ENCODE measurements at regions of chr10 and their contacts with region 1.

Region 1: DNA sequence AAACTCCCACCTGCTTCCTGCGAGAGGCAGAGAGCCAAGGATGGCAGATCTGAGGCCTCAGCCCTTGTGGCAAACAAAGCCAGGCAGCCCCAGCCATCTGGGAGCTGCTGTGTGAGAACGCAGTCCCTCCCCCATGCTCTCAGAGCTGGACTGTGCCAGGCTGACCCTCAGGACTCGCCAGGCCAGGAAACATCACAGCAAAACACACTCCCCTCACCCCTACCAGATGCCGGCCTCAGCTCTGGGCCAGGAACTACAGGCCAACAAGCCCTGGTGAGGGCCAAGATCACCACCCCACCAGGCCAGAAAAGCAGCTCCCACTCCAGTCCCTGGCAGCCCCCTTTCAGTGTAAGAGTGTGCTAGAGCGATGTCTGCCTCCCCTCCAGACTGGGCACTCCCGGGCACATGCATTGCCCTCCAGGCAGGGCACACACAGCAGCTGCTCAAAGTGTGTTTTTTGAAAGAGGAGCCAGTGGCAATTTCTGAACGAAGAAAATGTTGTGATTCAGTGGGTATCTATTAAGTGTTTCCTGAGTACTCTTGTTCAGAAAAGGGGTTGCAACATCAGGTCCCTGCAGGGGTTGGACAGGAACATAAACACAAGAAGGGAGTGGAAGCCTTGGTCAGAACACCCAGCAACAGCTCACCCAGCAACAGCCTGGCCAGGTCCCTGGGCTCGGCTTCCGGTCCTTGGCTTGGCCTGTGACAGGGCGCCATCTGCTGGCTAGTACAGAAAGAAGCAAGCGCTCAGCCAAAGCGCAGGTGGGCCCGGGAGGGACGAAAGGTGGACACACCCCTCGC is 18.3 kb downstream of the LRRC20 start:
- DNase-seq: peak; percentile 90
- ATAC-seq: peak; percentile 99
- H3K4me3 Mint-ChIP-seq: no peak overlapping the region
- H3K27ac Mint-ChIP-seq: no peak overlapping the region
- H3K4me1 Mint-ChIP-seq: peaks cover 9% of the 10 kb centered on the region
- H3K27me3 Mint-ChIP-seq: no peaks in the 10 kb centered on the region
- CTCF ChIP-seq: peak; percentile 87

Region 2: DNA sequence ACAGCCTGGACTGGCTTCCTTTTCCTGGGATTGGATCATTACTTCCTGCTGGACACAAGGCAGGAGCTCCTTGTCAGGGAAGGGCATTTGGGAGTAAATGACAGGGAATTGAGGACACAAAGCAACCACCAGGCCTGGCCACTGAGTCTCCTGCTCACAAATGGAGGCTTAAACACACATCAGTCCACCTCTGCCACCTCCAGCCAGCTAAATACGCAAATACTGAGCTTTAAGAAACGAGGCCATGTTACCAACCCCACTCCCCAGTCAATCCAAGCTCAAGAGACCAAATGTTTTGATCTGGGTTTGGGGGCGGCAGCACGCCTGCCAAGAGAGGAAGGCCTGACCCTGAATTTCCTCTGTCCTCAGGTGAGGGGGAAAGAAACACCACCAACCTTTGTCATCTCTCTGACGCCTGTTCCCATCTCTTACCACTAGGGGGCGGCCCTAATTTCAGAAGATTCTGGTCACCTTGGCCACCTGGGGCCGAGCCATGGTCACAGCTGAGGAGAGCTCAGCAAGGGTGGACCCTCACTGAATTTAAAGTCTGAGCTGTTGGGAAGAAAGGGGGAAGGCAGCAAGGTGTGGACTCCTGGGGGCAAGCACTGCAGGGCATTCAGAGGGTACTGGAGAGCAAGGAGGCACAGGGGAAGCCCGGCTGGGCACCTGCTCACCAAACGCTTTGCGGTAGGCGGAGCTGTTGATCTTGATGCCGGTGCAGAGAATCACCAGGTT is 248.1 kb before region 1 on chr10:
- CTCF ChIA-PET with region 1: interaction called, 26 read pairs
- POLR2A ChIA-PET with region 1: no interaction called
- intact Hi-C with region 1: no loop called
- DNase-seq: peak; percentile 77
- ATAC-seq: peak; percentile 93
- H3K4me3 Mint-ChIP-seq: no peak overlapping the region
- H3K27ac Mint-ChIP-seq: no peak overlapping the region
- H3K4me1 Mint-ChIP-seq: peaks cover 11% of the 10 kb centered on the region
- H3K27me3 Mint-ChIP-seq: no peaks in the 10 kb centered on the region
- CTCF ChIP-seq: peak; percentile 90

Region 3: DNA sequence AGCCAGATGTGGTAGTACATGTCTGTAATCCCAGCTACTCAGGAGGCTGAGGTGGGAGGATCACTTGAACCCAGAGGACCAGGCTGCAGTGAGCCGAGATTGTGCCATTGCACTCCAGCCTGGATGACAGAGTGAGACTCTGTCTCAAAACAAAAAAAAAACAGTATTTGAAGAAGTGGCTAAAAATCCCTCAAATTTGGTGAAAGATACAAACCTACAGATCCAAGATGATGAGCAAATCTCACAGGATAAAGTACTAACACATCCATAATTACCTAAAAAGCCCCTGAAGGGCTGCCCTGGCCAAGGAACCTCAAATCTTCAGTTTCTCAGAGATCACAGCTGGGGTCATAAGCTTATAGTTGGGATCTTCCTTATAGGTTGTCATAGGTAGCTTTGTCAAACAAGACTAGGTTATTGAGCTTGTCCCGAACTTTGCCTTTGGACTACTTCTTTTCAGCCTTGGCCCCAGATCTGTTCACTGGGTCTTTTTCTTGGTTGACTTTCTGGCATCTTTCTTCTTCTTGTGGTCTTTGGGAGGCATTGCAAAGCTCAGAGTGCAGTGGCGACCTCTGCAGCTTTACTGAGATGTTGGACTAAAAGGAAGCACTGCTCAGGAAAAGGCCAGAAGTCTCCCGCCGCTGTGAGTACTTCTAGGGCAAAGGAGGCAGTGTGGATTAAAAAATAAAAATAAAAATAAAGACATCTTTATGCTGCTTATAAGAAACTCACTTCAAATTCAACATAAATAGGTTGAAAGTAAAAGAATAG is 165.3 kb before region 1 on chr10:
- CTCF ChIA-PET with region 1: interaction called, 18 read pairs
- POLR2A ChIA-PET with region 1: no interaction called
- intact Hi-C with region 1: no loop called
- DNase-seq: peak; percentile 16
- ATAC-seq: no peak
- H3K4me3 Mint-ChIP-seq: no peak overlapping the region
- H3K27ac Mint-ChIP-seq: peak overlapping the region; percentile 20
- H3K4me1 Mint-ChIP-seq: peaks cover 31% of the 10 kb centered on the region
- H3K27me3 Mint-ChIP-seq: no peaks in the 10 kb centered on the region
- CTCF ChIP-seq: no peak

Region 4: DNA sequence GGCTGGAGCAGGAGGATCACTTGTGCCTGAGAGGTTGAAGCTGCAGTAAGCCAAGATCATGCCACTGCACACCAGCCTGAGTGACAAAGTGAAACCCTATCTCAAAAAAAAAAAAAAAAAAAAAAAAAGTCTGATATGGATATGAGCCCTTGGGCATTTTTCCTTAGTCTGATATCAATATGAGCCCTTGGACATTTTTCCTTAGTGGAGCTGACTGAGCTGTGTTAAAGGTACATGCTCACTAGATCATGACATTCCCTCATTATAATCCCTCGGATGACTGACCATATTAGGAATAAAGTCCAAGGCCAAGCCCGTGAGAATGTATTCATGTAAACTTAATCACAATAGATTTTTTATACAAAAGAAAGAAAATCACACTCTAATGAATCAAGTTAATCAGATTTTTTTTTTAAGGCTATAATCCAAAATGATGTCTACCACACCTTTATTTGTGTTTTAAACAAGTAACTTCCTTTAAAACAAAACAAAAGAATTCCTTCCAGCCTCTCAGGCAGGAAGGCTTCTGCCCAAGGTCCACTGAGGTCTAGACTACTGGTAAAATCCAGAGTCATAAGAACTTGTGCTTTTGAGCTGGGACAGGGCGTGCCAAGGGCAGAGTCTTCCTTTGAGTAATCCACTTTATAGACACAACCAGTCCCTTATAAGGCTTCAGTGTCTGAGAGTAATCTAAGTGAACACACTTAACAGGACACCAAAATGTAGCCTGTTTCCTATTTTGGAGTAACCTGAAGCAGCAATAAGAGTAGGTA is 136.4 kb before region 1 on chr10:
- CTCF ChIA-PET with region 1: interaction called, 321 read pairs
- POLR2A ChIA-PET with region 1: interaction called, 15 read pairs
- intact Hi-C with region 1: no loop called
- DNase-seq: no peak
- ATAC-seq: no peak
- H3K4me3 Mint-ChIP-seq: no peak overlapping the region
- H3K27ac Mint-ChIP-seq: no peak overlapping the region
- H3K4me1 Mint-ChIP-seq: peaks cover 49% of the 10 kb centered on the region
- H3K27me3 Mint-ChIP-seq: no peaks in the 10 kb centered on the region
- CTCF ChIP-seq: no peak

Region 5: GRCh38 chr10:70267161-70267933 is 96.8 kb before region 1 on chr10:
- CTCF ChIA-PET with region 1: interaction called, 48 read pairs
- POLR2A ChIA-PET with region 1: no interaction called
- intact Hi-C with region 1: no loop called
- DNase-seq: peak; percentile 35
- ATAC-seq: peak; percentile 28
- H3K4me3 Mint-ChIP-seq: no peak overlapping the region
- H3K27ac Mint-ChIP-seq: peak overlapping the region; percentile 10
- H3K4me1 Mint-ChIP-seq: peaks cover 10% of the 10 kb centered on the region
- H3K27me3 Mint-ChIP-seq: peaks cover 2% of the 10 kb centered on the region
- CTCF ChIP-seq: peak; percentile 46

Region 6: GRCh38 chr10:70320751-70321150 is 43.4 kb before region 1 on chr10:
- CTCF ChIA-PET with region 1: interaction called, 12 read pairs
- POLR2A ChIA-PET with region 1: no interaction called
- intact Hi-C with region 1: no loop called
- DNase-seq: no peak
- ATAC-seq: no peak
- H3K4me3 Mint-ChIP-seq: no peak overlapping the region
- H3K27ac Mint-ChIP-seq: no peak overlapping the region
- H3K4me1 Mint-ChIP-seq: peaks cover 31% of the 10 kb centered on the region
- H3K27me3 Mint-ChIP-seq: no peaks in the 10 kb centered on the region
- CTCF ChIP-seq: no peak

Region 7: GRCh38 chr10:70381471-70382421 is 17.6 kb after region 1 on chr10:
- CTCF ChIA-PET with region 1: interaction called, 37 read pairs
- POLR2A ChIA-PET with region 1: no interaction called
- intact Hi-C with region 1: no loop called
- DNase-seq: peak; percentile 51
- ATAC-seq: peak; percentile 42
- H3K4me3 Mint-ChIP-seq: peak overlapping the region; percentile 84
- H3K27ac Mint-ChIP-seq: peak overlapping the region; percentile 32
- H3K4me1 Mint-ChIP-seq: peaks cover 3% of the 10 kb centered on the region
- H3K27me3 Mint-ChIP-seq: no peaks in the 10 kb centered on the region
- CTCF ChIP-seq: peak; percentile 31

Region 8: DNA sequence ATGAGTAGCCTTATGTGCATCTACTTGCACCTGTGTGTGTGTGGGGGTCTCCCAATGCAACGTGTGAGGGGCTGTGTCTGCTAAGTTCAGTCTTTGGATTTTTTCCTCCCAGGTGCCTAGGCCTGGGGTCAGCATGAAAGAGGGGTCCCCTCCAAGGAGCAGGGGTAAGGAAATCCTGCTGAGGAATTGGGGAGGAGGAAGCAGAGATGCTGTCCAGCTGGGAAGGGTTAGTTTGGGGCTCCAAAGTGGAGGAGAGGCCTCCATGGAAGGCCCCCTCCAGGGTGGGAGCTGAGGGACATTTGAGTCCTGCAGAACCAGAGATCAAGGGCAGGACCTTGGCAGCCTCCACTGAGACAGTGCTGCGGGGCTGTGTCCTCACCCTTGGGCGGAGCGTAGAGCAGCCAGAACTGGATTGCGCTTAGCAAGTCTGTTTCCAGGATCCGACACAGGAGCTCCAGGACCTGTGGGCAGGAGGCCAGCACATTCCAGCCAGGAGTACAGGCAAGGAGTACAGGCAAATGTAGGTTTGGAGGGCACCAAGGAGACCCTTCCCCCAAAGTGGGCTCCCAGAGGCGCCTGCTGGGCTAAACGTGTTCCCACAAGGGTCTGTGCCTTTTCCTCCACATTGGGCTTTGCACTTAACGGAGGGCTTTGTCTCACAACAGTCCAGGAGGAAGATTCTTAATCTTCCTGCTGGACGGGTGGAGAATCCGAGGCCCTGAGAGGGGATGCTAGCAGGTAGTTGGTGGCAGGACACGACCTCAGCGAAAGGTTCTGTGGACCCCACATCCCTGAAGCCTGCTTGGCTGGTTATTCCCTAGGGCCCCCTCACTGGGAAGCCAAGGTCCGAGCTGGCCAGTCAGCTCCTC is 410.9 kb after region 1 on chr10:
- CTCF ChIA-PET with region 1: no interaction called
- POLR2A ChIA-PET with region 1: no interaction called
- intact Hi-C with region 1: no loop called
- DNase-seq: no peak
- ATAC-seq: no peak
- H3K4me3 Mint-ChIP-seq: no peak overlapping the region
- H3K27ac Mint-ChIP-seq: no peak overlapping the region
- H3K4me1 Mint-ChIP-seq: no peaks in the 10 kb centered on the region
- H3K27me3 Mint-ChIP-seq: no peaks in the 10 kb centered on the region
- CTCF ChIP-seq: no peak